ENCODE measurements at regions of chr6 and their contacts with region 1.

Region 1: DNA sequence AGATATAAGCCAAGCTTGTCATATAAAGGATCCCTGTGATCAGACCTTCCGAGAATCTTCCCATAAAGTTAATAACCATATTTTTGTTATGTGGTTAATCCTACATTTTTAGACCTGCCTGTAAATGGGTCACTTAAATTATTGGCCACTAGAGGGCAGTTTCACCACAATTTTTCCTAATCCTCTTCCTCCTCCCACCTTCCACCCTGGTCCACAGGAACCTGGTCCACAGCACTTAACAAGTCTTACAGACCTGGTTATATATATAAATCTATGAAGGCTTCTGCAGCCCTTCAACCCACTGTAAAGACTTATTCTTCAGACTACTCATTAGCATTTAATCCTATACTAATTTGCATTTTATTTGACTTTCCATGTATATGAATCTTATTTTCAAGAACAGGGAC is 28.3 kb downstream of the MRS2 start:
- DNase-seq: no peak
- H3K4me3 ChIP-seq: no peak overlapping the region
- H3K27ac ChIP-seq: no peak overlapping the region
- H3K4me1 ChIP-seq: no peaks in the 10 kb centered on the region
- H3K27me3 ChIP-seq: no peaks in the 10 kb centered on the region
- CTCF ChIP-seq: peak; percentile 58 to 75 (median 70)
- EP300 ChIP-seq: no peak
- POLR2A ChIP-seq: no peak

Region 2: DNA sequence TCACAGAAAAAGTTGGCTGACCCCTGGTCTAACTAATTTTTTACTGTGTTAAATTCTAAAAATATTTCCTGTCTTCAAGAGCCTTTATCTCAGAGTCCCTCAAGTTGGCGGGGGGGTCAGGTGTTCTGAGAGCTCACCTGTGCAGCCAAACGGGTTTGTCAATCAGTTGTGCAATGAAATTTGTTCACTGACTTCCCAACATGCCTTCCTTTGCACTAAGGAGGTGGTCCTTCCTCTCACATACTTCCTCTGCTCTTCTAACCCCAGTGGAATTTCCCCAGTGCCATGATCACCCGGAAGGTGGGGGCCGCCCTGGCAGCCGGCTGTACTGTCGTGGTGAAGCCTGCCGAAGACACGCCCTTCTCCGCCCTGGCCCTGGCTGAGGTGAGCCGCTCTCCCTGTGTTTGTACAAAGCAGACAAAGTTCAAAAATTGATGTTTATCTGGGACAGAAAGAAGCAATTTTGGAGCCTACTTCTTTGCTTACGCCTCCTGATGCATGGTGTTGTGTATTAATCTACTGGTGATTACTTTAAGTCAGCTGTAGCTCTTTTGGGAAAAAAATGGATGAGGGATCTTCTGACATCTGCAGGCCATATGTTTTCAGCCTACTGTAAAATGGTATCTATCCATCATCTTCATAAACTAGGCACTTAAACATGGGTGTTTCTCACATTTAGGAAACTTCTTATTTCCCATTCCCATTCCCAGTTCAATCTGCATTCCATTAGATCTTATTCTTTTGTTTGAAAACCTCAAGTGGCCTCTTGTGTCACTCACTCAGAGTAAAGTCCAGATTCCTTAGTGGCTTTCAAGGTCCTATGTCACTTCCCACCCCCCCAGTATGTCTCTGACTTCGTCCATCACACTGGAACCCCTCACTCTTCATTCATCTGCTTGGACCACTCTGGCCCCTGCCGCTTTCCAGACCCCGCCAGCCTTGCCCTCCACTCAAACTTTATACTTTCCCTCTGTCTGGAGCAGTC is 73.8 kb after region 1 on chr6:
- in situ Hi-C with region 1: loop called in 1 of 4 experiments (anchors 10 kb)
- intact Hi-C with region 1: no loop called
- DNase-seq: peak; percentile 60
- H3K4me3 ChIP-seq: no peak overlapping the region
- H3K27ac ChIP-seq: peak overlapping the region in 2 of 4 donors; percentile 15 to 54
- H3K4me1 ChIP-seq: peaks cover 0 to 11% (median 0%) of the 10 kb centered on the region in 4 donors
- H3K27me3 ChIP-seq: no peaks in the 10 kb centered on the region
- CTCF ChIP-seq: no peak
- EP300 ChIP-seq: no peak
- POLR2A ChIP-seq: no peak

Region 3: GRCh38 chr6:24520929-24521546 is 90.0 kb after region 1 on chr6:
- in situ Hi-C with region 1: loop called in 1 of 4 experiments (anchors 10 kb)
- intact Hi-C with region 1: no loop called
- DNase-seq: peak; percentile 62
- H3K4me3 ChIP-seq: no peak overlapping the region
- H3K27ac ChIP-seq: no peak overlapping the region
- H3K4me1 ChIP-seq: no peaks in the 10 kb centered on the region
- H3K27me3 ChIP-seq: no peaks in the 10 kb centered on the region
- CTCF ChIP-seq: peak; percentile 23 to 63 (median 53)
- EP300 ChIP-seq: no peak
- POLR2A ChIP-seq: no peak

Region 4: GRCh38 chr6:24775520-24776060 is 344.5 kb after region 1 on chr6:
- in situ Hi-C with region 1: no loop called
- intact Hi-C with region 1: no loop called
- DNase-seq: no peak
- H3K4me3 ChIP-seq: peak overlapping the region; percentile 68 to 91 (median 80)
- H3K27ac ChIP-seq: peak overlapping the region; percentile 92 to 99 (median 98)
- H3K4me1 ChIP-seq: peaks cover 3 to 32% (median 11%) of the 10 kb centered on the region in 4 donors
- H3K27me3 ChIP-seq: no peaks in the 10 kb centered on the region
- CTCF ChIP-seq: no peak
- EP300 ChIP-seq: no peak
- POLR2A ChIP-seq: no peak

Region 5: DNA sequence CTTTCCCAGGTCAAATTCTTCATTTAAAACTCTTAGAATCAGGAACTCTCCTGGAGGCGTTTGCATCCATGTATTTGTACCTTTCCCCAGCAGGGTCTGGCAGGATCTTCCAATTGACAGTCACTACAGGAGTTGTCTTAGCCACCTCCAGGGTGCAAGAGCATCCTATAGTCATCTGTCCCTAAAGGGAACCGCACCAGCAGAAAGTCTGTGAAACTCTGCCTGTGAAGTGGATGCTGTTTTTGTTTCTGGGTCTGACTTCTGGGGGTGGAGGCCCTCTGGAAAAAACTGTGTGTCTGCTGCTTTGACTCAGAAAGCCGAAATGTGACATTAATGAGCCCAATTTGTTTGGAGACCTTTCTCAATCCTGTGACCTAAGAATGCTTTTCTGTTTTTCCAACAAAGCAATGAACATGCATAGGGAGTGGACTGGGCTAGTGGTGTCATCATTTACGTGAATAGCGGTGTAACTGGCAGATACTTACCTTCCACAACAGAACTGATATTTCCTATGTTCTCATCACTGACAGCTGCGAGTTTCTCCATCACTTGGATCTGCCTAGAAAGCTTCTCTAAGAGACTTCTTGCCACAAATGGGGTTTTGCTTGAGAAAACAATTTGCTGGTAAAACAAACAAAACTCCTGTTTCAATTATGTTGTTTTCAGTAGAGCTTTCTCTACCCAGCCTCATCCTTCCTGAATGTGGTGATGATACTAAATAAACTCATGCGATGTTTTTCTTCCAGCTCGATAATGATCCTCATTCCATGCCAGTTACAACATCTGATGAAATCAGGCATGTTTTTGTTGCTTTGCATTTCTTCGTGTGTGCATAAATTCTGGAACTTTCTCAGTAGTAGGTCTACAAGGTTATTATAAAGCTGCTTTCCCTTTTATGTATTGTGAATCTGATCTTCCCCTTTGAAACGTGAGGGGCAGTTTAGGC is 401.0 kb after region 1 on chr6:
- in situ Hi-C with region 1: no loop called
- intact Hi-C with region 1: no loop called
- DNase-seq: no peak
- H3K4me3 ChIP-seq: no peak overlapping the region
- H3K27ac ChIP-seq: no peak overlapping the region
- H3K4me1 ChIP-seq: no peaks in the 10 kb centered on the region
- H3K27me3 ChIP-seq: no peaks in the 10 kb centered on the region
- CTCF ChIP-seq: no peak
- EP300 ChIP-seq: no peak
- POLR2A ChIP-seq: no peak